Ovary (tissue), 10 donors: ENCODE measurements at regions of chr6 and their contacts with region 1.

Region 1: DNA sequence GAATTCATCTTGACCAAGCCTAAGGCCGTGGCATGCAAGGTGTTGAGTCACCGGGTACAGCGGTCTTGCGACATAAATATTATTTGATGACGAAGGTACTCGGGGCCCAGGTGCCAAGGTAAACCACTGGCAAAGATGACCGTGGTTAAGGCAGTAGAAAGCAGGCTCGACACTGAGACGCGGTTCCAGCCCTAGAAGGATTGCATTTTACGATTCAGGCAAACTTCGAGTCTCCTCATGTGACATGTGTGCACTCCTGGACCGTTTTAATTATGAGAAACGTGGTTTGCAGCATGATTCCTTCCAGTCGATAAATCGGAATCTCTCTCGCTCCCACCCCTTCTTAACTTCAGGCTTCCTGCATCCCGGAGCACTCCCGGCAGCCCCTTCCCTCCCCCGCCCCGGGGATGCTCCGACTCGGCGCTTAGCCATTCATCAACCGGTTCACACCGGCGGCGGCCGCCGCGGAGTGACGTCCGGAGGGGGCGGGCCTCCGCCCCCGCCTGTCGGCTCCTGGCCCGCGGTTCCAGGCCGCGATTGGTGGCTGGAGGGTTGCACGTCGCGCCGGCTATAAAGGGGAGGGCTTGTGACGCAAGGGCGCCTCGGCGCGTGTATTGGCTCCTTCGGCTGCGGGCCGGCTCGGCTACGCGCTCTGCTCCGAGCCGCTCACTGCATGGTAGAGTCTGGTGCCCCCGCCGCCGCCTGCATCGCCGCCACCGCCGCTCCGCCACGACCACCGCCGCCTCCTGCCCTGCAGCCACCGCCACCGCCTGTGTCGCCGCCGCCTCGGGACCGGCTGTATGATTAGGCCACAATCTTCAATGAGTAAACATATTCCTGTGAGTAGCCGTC is at the starts of genes LOC128125822 and PTP4A1:
- DNase-seq: peak; percentile 97 to 99 (median 98)
- H3K4me3 ChIP-seq: peak within 1 kb of the TSS; percentile 96
- H3K27ac ChIP-seq: peak within 1 kb of the TSS; percentile 95 to 100
- H3K4me1 ChIP-seq: no peaks in the 10 kb centered on the region
- H3K27me3 ChIP-seq: no peaks in the 10 kb centered on the region
- CTCF ChIP-seq: peak in 1 of 3 donors; percentile 10
- EP300 ChIP-seq: peak; percentile 64
- POLR2A ChIP-seq: peak; percentile 99
- total RNA-seq, gene PTP4A1: 22.2 to 89.4 (median 44.1) TPM

Region 2: GRCh38 chr6:63224179-63224578 is 347.9 kb before region 1 on chr6:
- intact Hi-C with region 1: no loop called
- DNase-seq: no peak
- H3K4me3 ChIP-seq: no peak overlapping the region
- H3K27ac ChIP-seq: no peak overlapping the region
- H3K4me1 ChIP-seq: no peaks in the 10 kb centered on the region
- H3K27me3 ChIP-seq: no peaks in the 10 kb centered on the region
- CTCF ChIP-seq: no peak
- EP300 ChIP-seq: no peak
- POLR2A ChIP-seq: no peak

Region 3: DNA sequence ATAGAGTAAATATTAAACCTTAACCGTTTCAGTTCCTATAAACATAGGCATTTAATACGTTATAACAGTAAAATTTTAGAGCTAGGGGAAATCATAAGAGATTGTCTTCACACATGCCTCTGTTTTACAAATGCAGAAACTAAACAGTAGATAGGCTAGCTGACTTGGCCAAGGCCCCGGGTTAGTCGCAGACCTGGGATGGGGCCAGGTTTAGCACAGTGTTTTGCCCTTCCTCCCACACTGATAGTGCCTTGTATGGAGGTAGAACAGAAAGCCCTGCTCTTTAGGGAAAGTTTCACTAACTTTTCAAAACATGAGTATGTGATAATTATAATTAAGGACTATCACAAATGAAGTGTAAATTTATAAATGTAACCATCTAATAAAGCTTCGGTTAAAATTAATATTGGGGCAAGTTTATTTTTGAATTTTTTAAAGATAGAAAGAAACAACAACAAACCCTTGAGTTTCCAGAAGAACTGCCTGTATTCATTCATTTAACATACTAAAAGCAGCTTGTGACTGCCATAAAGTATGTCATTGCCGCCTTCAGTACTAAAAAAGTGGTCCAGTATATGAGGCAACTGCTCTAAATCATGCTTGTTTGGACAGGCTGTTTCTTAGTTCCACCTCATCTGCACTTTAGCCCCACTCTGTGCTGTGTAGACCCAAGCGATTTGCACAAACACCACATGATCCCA is 62.3 kb before region 1 on chr6:
- intact Hi-C with region 1: loop called in 1 of 4 experiments (anchors 2 kb)
- DNase-seq: peak; percentile 80 to 90 (median 85)
- H3K4me3 ChIP-seq: no peak overlapping the region
- H3K27ac ChIP-seq: peak overlapping the region in 1 of 2 donors; percentile 16
- H3K4me1 ChIP-seq: no peaks in the 10 kb centered on the region
- H3K27me3 ChIP-seq: no peaks in the 10 kb centered on the region
- CTCF ChIP-seq: no peak
- EP300 ChIP-seq: no peak
- POLR2A ChIP-seq: no peak

Region 4: GRCh38 chr6:63635588-63636517 is 63.7 kb after region 1 on chr6 and contains the start of gene PHF3:
- intact Hi-C with region 1: loop called in 1 of 4 experiments (anchors 10 kb)
- DNase-seq: peak; percentile 91 to 94 (median 92)
- H3K4me3 ChIP-seq: peak within 1 kb of the TSS; percentile 91
- H3K27ac ChIP-seq: peak within 1 kb of the TSS; percentile 94 to 96
- H3K4me1 ChIP-seq: peaks cover 6% of the 10 kb centered on the region
- H3K27me3 ChIP-seq: no peaks in the 10 kb centered on the region
- CTCF ChIP-seq: peak in 2 of 3 donors; percentile 10 to 37
- EP300 ChIP-seq: no peak
- POLR2A ChIP-seq: peak; percentile 34
- total RNA-seq, gene PHF3: 58.5 to 83.7 (median 71.0) TPM

Region 5: GRCh38 chr6:63714091-63714490 is 142.0 kb after region 1 on chr6:
- intact Hi-C with region 1: no loop called
- DNase-seq: no peak
- H3K4me3 ChIP-seq: no peak overlapping the region
- H3K27ac ChIP-seq: no peak overlapping the region
- H3K4me1 ChIP-seq: no peaks in the 10 kb centered on the region
- H3K27me3 ChIP-seq: no peaks in the 10 kb centered on the region
- CTCF ChIP-seq: no peak
- EP300 ChIP-seq: no peak
- POLR2A ChIP-seq: no peak

Region 6: DNA sequence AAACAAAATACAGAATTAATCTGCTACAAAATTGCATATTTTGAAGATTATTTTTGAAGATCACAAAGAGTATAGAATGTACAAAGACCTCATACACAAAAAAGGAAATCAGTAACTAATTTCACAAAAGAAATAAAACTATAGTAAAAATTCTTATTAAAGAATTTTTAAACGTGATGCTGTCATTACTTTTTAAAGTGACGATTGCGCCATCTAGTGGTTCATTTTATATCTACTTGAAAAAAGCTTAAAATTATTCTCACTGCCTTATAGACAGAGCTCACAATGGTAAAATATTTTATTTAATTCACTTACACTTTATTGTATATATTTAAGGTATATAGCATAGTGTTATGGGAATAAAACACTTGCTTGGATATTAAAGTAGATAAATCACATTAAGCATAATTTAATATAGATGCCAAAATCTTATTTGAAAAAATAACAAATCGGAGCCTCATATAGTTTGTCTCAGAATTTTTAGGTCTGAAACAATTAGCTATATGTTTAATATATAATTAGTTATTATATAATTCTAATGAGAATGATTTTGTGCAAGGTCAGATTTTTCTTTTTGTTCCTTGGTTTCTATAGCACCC is 192.3 kb after region 1 on chr6:
- intact Hi-C with region 1: no loop called
- DNase-seq: no peak
- H3K4me3 ChIP-seq: no peak overlapping the region
- H3K27ac ChIP-seq: no peak overlapping the region
- H3K4me1 ChIP-seq: no peaks in the 10 kb centered on the region
- H3K27me3 ChIP-seq: no peaks in the 10 kb centered on the region
- CTCF ChIP-seq: peak in 1 of 3 donors; percentile 48
- EP300 ChIP-seq: no peak
- POLR2A ChIP-seq: no peak

Region 7: GRCh38 chr6:64064919-64065318 is 492.8 kb after region 1 on chr6:
- intact Hi-C with region 1: no loop called
- DNase-seq: no peak
- H3K4me3 ChIP-seq: no peak overlapping the region
- H3K27ac ChIP-seq: no peak overlapping the region
- H3K4me1 ChIP-seq: no peaks in the 10 kb centered on the region
- H3K27me3 ChIP-seq: no peaks in the 10 kb centered on the region
- CTCF ChIP-seq: no peak
- EP300 ChIP-seq: no peak
- POLR2A ChIP-seq: no peak